PC-9 (cell line): ENCODE measurements at regions of chr1 and their contacts with region 1.

Region 1: DNA sequence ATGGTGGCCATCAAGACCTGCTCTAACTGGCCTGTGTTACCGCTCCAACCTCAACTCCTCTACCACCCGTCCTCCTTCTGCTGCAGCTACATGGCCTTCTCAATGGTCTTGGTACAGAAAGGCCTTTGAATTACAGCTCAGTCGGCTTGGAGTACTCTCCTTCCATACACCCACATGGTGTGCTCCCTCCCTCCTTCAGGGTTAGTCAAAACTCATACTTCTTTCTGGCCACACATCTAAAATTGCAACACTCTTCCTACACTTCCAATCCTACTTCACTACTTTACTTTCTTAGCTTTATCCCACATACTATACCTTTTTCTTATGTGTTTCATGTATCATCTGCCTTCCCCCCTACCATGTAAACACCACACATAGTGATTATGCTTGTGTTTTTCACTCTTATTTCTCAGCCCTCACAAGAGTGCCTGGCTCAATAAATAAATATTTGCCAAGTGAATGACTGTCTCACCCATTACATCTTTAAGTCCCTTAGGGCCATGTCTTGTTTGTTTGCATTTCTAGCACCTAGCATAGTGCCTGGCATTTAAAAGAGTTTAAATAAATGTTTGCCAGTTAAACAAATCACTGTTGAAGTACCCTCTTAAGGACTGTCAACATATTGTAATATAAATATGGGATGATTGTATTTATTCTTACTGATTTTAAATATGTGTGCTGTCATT is 37.6 kb upstream of the HMCN1 start:
- DNase-seq: no peak
- H3K4me3 ChIP-seq: no peak overlapping the region
- H3K27ac ChIP-seq: no peak overlapping the region
- H3K4me1 ChIP-seq: no peaks in the 10 kb centered on the region
- H3K27me3 ChIP-seq: no peaks in the 10 kb centered on the region
- CTCF ChIP-seq: no peak

Region 2: GRCh38 chr1:185483664-185484450 is 212.7 kb before region 1 on chr1:
- CTCF ChIA-PET with region 1: interaction called, 15 read pairs
- POLR2A ChIA-PET with region 1: no interaction called
- intact Hi-C with region 1: no loop called
- DNase-seq: peak; percentile 4 to 38
- H3K4me3 ChIP-seq: no peak overlapping the region
- H3K27ac ChIP-seq: no peak overlapping the region
- H3K4me1 ChIP-seq: 0 out of 2 replicates have a peak, but pooled peaks cover 4% of the 10 kb centered on the region
- H3K27me3 ChIP-seq: no peaks in the 10 kb centered on the region
- CTCF ChIP-seq: no peak

Region 3: GRCh38 chr1:185674201-185674600 is 22.4 kb before region 1 on chr1:
- CTCF ChIA-PET with region 1: no interaction called
- POLR2A ChIA-PET with region 1: no interaction called
- intact Hi-C with region 1: no loop called
- DNase-seq: no peak
- H3K4me3 ChIP-seq: no peak overlapping the region
- H3K27ac ChIP-seq: no peak overlapping the region
- H3K4me1 ChIP-seq: no peaks in the 10 kb centered on the region
- H3K27me3 ChIP-seq: no peaks in the 10 kb centered on the region
- CTCF ChIP-seq: no peak